ENCODE measurements at regions of chr3 and their contacts with region 1.

Region 1: DNA sequence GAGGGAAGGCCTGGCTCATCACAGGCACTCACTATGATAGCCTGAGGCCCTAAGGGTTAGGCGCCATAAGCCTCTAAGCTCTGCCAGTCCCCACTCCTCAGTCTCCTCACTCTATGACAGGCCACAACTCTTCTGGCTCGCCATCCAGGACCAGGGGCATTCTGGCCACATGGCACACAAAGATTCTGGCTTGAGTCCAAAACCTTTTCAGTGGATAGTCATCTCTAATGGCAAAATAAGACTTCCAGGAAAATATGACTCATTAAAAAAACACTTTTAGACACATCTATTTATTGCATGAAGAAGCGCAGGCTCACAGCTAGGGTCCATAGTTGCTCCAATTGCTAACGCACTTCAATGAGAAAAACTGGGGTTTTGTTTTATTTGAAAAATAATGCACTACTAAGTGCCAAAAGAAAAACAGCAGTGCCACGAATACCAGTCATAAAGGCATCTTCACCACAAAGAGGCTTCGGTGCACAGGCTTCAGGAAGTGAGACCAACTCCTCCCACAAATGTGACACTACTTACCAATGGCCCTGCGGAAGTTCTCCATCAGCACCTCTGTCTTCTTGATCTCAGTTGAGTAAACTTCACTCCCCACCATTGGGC is 11.1 kb downstream of the RUVBL1 start:
- DNase-seq: peak; percentile 65
- ATAC-seq: peak; percentile 95
- H3K4me3 Mint-ChIP-seq: peak overlapping the region; percentile 15
- H3K27ac Mint-ChIP-seq: peak overlapping the region; percentile 93
- H3K4me1 Mint-ChIP-seq: peaks cover 47% of the 10 kb centered on the region
- H3K27me3 Mint-ChIP-seq: no peaks in the 10 kb centered on the region

Region 2: GRCh38 chr3:127822698-127823425 is 289.6 kb before region 1 on chr3:
- CTCF ChIA-PET with region 1: no interaction called
- POLR2A ChIA-PET with region 1: no interaction called
- intact Hi-C with region 1: no loop called
- DNase-seq: peak; percentile 31
- ATAC-seq: peak; percentile 61
- H3K4me3 Mint-ChIP-seq: peak overlapping the region; percentile 70
- H3K27ac Mint-ChIP-seq: no peak overlapping the region
- H3K4me1 Mint-ChIP-seq: peaks cover 3% of the 10 kb centered on the region
- H3K27me3 Mint-ChIP-seq: peaks cover 42% of the 10 kb centered on the region

Region 3: DNA sequence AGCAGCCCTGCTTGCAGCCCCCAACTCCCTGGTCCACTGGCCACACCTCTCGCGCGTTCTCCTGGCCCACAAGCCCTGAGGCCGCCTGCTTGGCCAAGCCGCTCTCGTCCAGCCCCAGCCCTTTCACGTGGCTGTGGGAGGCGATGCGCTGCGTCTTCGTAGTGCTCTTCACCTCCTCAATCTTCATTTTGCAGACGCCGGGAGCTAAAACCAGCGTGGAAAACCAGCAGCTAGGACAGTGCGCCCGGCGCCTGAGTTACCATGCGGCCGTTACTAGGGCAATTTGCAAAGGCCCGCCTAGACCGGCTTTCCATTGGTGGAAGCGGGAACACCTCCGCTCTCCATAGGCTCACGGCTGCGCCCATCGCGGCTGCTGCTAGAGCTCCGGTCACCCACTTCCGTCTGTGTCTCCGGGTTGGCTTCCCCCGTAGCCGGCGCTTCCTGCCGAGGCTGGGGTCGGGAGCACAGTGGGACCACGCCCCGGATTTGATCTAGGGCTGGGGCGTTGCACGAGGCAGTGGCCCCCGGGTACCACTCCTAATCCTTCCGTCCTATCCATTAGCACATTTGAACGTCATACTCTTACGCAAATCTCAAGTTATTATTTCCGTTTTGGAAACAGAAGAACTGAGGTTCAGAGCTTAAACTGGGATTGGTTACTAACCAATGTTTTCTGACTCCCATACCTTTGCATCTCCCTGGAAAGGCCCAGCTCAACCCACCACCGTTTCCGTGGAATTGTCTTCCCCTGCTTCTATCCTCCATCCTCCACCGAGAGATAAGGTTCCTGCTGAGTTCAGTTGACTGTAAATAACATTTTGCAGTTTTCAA is 11.3 kb after region 1 on chr3 and contains the start of gene RUVBL1:
- CTCF ChIA-PET with region 1: interaction called, 4 read pairs
- POLR2A ChIA-PET with region 1: interaction called, 10 read pairs
- intact Hi-C with region 1: loop called in 1 of 2 experiments (anchors 1 kb)
- DNase-seq: peak; percentile 99
- ATAC-seq: peak; percentile 99
- H3K4me3 Mint-ChIP-seq: peak within 1 kb of the TSS; percentile 99
- H3K27ac Mint-ChIP-seq: peak within 1 kb of the TSS; percentile 96
- H3K4me1 Mint-ChIP-seq: peaks cover 30% of the 10 kb centered on the region
- H3K27me3 Mint-ChIP-seq: no peaks in the 10 kb centered on the region
- total RNA-seq, gene RUVBL1: 97.0 to 99.9 TPM

Region 4: GRCh38 chr3:128170805-128171516 is 58.5 kb after region 1 on chr3:
- CTCF ChIA-PET with region 1: no interaction called
- POLR2A ChIA-PET with region 1: no interaction called
- intact Hi-C with region 1: no loop called
- DNase-seq: peak; percentile 18
- ATAC-seq: peak; percentile 30
- H3K4me3 Mint-ChIP-seq: no peak overlapping the region
- H3K27ac Mint-ChIP-seq: no peak overlapping the region
- H3K4me1 Mint-ChIP-seq: peaks cover 25% of the 10 kb centered on the region
- H3K27me3 Mint-ChIP-seq: no peaks in the 10 kb centered on the region

Measured in activated CD4-positive, alpha-beta T cell treated with anti-CD3 and anti-CD28 coated beads for 36 hours (primary cell).